Ascending aorta (tissue), 2 donors: ENCODE measurements at regions of chr2 and their contacts with region 1.

Region 1: GRCh38 chr2:241149925-241150659 is at the start of gene PPP1R7:
- DNase-seq: peak; percentile 85 to 98
- H3K4me3 ChIP-seq: peak within 1 kb of the TSS; percentile 70 to 95
- H3K27ac ChIP-seq: peak within 1 kb of the TSS; percentile 62 to 87
- H3K4me1 ChIP-seq: peaks cover 0 to 15% of the 10 kb centered on the region in 2 donors
- H3K27me3 ChIP-seq: no peaks in the 10 kb centered on the region
- CTCF ChIP-seq: peak in 1 of 3 experiments; percentile 14
- total RNA-seq, gene PPP1R7: 4.2 TPM

Region 2: DNA sequence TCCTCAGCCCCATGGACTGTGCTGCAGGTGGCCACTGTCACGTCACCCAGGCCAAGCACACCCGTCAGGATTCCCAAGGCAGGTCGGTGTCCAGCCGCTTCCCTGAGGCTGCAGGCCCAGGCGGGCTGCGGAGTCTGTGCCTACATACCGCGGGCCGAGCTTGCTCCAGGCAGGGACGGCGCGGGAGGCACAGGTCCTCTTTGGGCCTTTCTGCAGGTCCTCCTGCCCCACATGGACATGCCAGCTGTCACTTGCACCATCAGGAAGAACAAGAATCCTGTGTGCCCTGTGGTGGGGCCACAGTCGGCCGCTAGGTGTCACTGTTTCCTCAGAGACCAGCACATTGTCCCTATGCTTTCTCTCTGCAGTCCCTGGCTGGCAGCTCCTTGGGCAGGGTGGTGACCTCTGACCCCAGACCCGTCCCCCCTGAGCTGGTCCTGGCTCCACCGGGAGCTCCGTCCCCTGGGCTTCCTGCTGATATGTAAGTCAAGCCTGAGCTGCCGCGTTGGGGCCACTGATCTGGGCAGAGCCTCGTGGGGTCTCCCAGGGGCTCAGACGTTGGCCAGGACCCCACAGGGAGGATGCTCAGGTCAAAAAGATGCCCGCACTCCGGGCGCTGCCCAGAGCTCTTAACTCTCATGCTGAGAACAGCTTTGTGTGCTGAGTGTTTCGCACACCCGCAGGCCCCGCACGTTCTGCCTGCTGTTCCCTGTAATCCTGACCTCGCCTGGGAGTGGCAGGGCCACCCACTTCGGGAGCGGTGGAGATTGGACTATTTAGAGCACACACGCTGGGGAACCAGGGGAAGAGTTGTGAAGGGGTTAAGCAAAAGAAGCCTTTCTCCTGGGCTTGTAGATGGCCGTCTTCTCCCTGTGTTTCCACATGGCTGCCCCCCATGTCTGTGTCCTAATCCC is 298.8 kb before region 1 on chr2:
- intact Hi-C with region 1: loop called (anchors 2 kb)
- DNase-seq: peak in 1 of 2 donors; percentile 89
- H3K4me3 ChIP-seq: no peak overlapping the region
- H3K27ac ChIP-seq: no peak overlapping the region
- H3K4me1 ChIP-seq: no peaks in the 10 kb centered on the region
- H3K27me3 ChIP-seq: no peaks in the 10 kb centered on the region
- CTCF ChIP-seq: peak; percentile 87 to 95 (median 94)

Region 3: DNA sequence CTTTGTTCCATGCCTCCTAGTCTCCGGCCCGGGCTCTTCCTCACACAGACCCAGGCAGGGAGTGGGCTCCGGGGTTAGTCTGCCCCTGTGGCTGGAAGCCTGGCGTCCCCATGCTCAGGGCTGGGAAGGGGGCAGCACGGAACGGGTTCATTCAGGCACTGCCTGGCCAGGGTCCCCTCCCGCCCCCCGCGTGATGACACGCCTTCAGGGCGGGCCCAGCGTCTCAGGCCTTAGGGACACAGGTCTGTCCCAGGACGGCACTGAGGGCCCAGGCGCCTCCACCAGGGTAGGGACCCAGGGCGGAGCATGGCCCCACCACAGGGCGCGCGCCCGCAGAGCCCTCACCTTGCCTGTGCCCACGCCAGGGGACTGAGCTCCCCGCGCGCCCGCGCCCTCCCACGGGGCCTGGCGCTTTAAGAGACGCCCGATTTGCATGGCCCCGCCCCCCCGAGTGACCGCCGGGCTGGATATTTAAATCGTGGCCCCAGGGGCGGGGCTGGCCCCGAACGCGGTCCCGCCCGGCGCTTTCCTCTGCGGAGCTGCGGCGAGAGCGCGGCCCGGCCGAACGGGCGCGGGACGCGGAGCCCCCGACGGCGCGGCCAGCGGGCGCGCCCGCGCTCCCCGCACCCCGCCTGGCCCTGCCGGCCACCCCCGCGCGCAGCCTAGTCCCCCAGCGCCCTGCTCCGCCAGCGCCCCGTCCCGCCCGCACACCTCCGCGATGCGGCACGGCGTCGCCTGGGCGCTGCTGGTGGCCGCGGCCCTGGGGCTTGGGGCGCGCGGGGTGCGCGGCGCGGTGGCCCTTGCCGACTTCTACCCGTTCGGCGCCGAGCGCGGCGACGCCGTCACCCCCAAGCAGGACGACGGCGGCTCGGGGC is 151.7 kb before region 1 on chr2 and contains the start of gene SNED1:
- intact Hi-C with region 1: loop called (anchors 2 kb)
- DNase-seq: peak; percentile 54 to 93
- H3K4me3 ChIP-seq: peak within 1 kb of the TSS; percentile 79 to 91
- H3K27ac ChIP-seq: peak within 1 kb of the TSS; percentile 92 to 93
- H3K4me1 ChIP-seq: peaks cover 39 to 55% of the 10 kb centered on the region in 2 donors
- H3K27me3 ChIP-seq: no peaks in the 10 kb centered on the region
- CTCF ChIP-seq: no peak
- total RNA-seq, gene SNED1: 84.3 TPM

Region 4: GRCh38 chr2:241217320-241218031 is 67.4 kb after region 1 on chr2:
- intact Hi-C with region 1: loop called (anchors 2 kb)
- DNase-seq: peak in 1 of 2 donors; percentile 77
- H3K4me3 ChIP-seq: peak overlapping the region; percentile 40 to 65
- H3K27ac ChIP-seq: peak overlapping the region; percentile 78 to 90
- H3K4me1 ChIP-seq: peaks cover 0 to 7% of the 10 kb centered on the region in 2 donors
- H3K27me3 ChIP-seq: no peaks in the 10 kb centered on the region
- CTCF ChIP-seq: no peak

Region 5: DNA sequence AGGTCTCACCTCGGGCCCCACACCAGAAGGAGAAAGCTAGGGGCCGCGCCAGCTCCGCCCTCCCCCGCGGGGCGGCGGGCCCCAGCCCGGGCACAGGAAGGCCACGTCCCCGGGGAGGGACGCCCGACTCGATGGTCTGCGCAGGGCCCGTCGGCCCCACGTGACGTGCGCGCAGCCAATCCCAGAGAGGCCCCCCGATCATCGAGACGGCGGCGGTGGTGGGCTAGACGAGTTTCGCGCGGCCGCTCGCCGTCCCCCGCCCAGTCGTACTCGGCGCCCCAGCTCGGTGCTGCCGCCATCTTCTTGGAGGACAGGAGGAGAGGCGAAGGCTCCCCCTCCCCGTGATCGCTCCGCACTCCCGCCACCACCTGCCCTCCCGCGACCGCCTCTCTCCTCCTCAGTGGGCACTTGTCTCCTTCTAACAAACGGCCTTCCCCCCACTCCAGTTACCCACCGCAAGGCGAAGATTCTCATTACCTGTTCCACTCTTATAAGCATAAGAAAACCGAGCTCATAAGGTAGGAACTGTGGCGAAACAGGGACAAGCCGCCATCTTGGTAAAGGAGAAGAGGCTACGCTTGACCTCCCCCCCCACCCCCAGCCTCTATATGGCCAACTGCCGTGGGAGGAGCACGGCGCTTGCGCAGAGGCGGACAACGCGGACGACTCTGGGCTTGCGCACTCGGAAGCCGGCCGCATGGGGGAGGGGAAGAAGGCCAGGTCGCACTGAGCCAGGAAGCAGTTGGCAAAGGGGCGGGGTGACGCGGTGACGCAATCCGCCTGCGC is 165.2 kb after region 1 on chr2 and contains the start of gene HDLBP:
- intact Hi-C with region 1: loop called (anchors 2 kb)
- DNase-seq: peak; percentile 97 to 100
- H3K4me3 ChIP-seq: peak within 1 kb of the TSS; percentile 85 to 98
- H3K27ac ChIP-seq: peak within 1 kb of the TSS; percentile 99
- H3K4me1 ChIP-seq: peaks cover 0 to 33% of the 10 kb centered on the region in 2 donors
- H3K27me3 ChIP-seq: no peaks in the 10 kb centered on the region
- CTCF ChIP-seq: peak; percentile 16 to 28 (median 25)
- total RNA-seq, gene HDLBP: 308 TPM

Region 6: GRCh38 chr2:241399941-241400919 is 250.1 kb after region 1 on chr2:
- intact Hi-C with region 1: no loop called
- DNase-seq: no peak
- H3K4me3 ChIP-seq: no peak overlapping the region
- H3K27ac ChIP-seq: no peak overlapping the region
- H3K4me1 ChIP-seq: no peaks in the 10 kb centered on the region
- H3K27me3 ChIP-seq: no peaks in the 10 kb centered on the region
- CTCF ChIP-seq: no peak

Region 7: GRCh38 chr2:241858206-241859016 is 708.3 kb after region 1 on chr2 and contains the start of gene PDCD1:
- intact Hi-C with region 1: no loop called
- DNase-seq: no peak
- H3K4me3 ChIP-seq: peak within 1 kb of the TSS in 1 of 2 donors; percentile 40
- H3K27ac ChIP-seq: peak within 1 kb of the TSS; percentile 38 to 64
- H3K4me1 ChIP-seq: no peaks in the 10 kb centered on the region
- H3K27me3 ChIP-seq: peaks cover 5% of the 10 kb centered on the region
- CTCF ChIP-seq: no peak
- total RNA-seq, gene PDCD1: not detected